Dorsolateral prefrontal cortex (tissue), 120 donors: ENCODE measurements at regions of chr14 and their contacts with region 1.

Region 1: DNA sequence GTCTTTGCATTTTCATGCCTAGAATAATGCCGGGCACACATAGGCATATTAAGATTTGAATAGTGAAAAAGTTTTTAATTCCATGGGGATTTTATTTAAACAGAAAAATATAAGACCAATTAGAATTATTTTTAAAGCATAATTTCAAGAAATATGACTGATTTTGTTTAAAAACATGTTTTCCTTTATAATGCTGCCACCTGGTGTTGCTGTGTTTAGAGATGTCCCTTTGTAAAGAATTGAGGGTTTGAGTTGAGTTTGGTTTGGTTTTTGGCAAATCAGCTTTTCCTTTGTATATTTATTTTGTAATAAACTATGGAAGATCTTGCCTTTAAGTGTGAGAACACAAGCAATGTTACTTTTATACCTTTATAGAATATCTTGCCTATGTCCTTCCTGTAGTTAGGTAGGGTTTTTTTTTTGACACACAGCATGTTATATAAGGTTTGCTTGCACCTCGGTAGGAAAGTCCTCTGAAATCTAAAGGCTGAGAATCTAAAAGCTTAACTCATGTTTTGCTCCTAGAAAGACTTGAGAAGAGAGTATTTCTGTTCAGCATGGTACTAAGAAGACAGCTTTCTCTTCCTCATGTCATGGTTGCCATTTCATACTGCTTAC is 31.4 kb upstream of the SNAPC1 start:
- DNase-seq: no peak
- H3K4me3 ChIP-seq: no peak overlapping the region
- H3K27ac ChIP-seq: peak overlapping the region in 28 of 59 donors; percentile 5 to 67 (median 39)
- H3K27me3 ChIP-seq: no peaks in the 10 kb centered on the region
- CTCF ChIP-seq: peak; percentile 26 to 86 (median 70)

Region 2: GRCh38 chr14:61461808-61462275 is 269.0 kb before region 1 on chr14:
- intact Hi-C with region 1: loop called (anchors 2 to 5 kb)
- DNase-seq: peak in 1 of 10 donors; percentile 53
- H3K4me3 ChIP-seq: no peak overlapping the region
- H3K27ac ChIP-seq: no peak overlapping the region
- H3K27me3 ChIP-seq: no peaks in the 10 kb centered on the region
- CTCF ChIP-seq: peak; percentile 80 to 99 (median 91)